Activated naive CD8-positive, alpha-beta T cell treated with anti-CD3 and anti-CD28 coated beads, Interleukin-2, amount 10 ng/mL, durations not matched to agents 7 days and 5 days (primary cell): ENCODE measurements at regions of chr6 and their contacts with region 1.

Region 1: GRCh38 chr6:36027501-36028087 is at the start of gene MAPK14:
- DNase-seq: peak; percentile 96
- ATAC-seq: peak; percentile 89
- H3K4me3 Mint-ChIP-seq: peak within 1 kb of the TSS; percentile 94
- H3K27ac Mint-ChIP-seq: peak within 1 kb of the TSS; percentile 94
- H3K4me1 Mint-ChIP-seq: peaks cover 30% of the 10 kb centered on the region
- H3K27me3 Mint-ChIP-seq: peaks cover 24% of the 10 kb centered on the region
- total RNA-seq, gene MAPK14: 57.3 to 62.2 TPM

Region 2: DNA sequence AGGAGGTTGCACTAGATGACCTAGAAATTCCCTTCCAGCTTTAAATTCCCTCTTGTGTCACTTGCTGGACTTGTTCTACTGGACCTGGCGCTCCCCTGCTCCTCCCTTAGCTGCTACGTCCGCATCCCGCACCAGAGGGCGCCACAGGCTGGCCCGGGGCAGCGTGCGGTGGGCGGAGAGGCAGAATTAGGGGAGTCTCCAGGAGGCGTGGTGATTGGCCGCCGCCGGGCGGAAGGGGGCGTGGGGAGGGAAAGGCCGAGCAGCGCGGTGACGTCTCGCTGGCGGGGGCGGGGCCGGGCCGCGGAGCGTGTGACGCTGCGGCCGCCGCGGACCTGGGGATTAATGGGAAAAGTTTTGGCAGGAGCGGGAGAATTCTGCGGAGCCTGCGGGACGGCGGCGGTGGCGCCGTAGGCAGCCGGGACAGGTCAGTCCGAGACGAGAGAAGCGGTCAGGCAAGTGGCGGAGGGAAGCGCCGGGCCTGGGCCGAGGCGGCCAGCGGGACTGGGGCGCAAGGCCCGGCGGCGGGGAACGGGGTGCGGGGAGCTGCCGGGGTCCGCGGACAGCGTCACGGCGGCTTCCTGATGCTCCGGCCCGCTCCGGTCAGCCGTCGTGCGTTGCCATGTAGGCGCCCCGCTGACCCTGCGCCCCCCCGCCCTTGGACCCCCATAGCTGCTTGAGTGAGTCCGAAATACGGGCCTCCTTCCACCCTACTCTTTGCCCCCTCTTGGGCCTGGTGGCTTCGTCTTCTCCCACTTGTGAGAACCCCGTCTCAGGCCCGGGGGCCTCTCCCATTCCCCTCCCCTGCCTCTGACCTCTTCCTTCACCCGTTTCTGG is 685.1 kb before region 1 on chr6 and contains the start of gene PPARD:
- POLR2A ChIA-PET with region 1: no interaction called
- DNase-seq: peak; percentile 100
- ATAC-seq: peak; percentile 96
- H3K4me3 Mint-ChIP-seq: peak within 1 kb of the TSS; percentile 97
- H3K27ac Mint-ChIP-seq: peak within 1 kb of the TSS; percentile 88
- H3K4me1 Mint-ChIP-seq: peaks cover 42% of the 10 kb centered on the region
- H3K27me3 Mint-ChIP-seq: peaks cover 5% of the 10 kb centered on the region
- total RNA-seq, gene PPARD: 43.0 to 45.9 TPM

Region 3: DNA sequence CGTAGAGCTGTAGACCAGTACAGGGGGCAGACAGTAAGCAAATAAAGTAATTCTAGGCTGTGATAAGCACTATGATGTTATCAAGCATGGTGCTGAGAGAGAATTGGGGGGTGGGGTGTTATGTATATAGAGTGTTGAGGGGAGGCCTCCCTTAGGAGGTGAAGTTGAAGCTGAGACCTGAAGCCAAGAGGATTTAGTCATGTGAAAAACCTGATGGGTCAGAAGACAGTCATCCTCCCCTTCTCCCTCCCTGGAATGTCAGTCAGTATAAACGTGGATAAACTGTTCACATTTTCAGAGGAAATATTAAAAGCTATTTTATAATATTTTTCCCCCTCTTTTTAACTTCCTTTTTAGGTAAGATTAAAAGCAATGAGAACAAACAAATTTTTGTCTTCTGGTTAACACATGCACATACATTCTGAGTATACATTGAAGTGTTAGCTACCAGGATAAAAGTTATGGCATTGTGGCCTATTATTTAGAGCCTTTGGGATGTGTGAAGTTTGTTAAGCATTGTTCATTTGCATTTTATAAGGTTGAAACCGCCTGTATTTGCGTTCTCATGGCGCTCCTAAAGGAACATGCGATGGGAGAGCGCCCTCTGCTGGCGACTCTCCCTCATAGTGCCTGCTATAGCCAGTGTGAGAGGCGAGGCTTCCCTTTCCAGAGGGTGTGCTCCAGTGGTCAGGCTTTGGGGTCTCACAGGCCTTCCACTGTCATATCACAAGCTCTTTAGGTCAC is 67.3 kb after region 1 on chr6:
- POLR2A ChIA-PET with region 1: interaction called, 32 read pairs
- DNase-seq: peak; percentile 83
- ATAC-seq: peak; percentile 80
- H3K4me3 Mint-ChIP-seq: no peak overlapping the region
- H3K27ac Mint-ChIP-seq: no peak overlapping the region
- H3K4me1 Mint-ChIP-seq: peaks cover 16% of the 10 kb centered on the region
- H3K27me3 Mint-ChIP-seq: no peaks in the 10 kb centered on the region

Region 4: DNA sequence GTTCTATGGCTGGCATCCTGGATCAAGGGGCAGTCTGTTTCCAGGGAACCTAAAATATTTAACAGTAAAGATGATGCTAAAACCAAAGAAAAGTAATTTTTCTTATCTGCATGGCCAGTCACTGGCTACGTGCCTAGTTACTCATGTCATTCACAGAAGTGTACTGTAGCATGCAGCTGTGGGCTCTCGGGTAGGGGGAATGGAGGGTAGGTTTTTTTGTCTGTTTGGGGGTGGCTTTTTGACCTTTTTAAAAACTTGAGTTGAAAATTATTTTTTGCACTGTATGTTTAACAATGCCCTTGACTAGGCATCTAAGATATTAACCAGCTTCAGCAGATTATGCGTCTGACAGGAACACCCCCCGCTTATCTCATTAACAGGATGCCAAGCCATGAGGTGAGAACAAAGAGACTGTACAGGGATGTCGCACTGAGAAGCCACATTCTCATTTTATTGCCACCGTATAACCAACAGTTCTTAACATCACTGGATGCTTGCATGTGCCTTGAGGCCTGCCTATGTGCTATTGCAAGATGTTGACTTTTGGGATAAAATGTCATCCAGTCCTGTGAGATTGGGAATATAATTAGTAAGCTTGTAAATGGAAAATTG is 72.4 kb after region 1 on chr6:
- POLR2A ChIA-PET with region 1: interaction called, 32 read pairs
- DNase-seq: no peak
- ATAC-seq: peak; percentile 78
- H3K4me3 Mint-ChIP-seq: peak overlapping the region; percentile 17
- H3K27ac Mint-ChIP-seq: peak overlapping the region; percentile 64
- H3K4me1 Mint-ChIP-seq: peaks cover 24% of the 10 kb centered on the region
- H3K27me3 Mint-ChIP-seq: no peaks in the 10 kb centered on the region